Activated CD4-positive, alpha-beta T cell treated with anti-CD3 and anti-CD28 coated beads, Interleukin-2, amount 10 ng/mL, durations not matched to agents 24 days and 14 days (primary cell): ENCODE measurements at regions of chr13 and their contacts with region 1.

Region 1: GRCh38 chr13:99442273-99442895 is 58.9 kb upstream of the TM9SF2 start:
- DNase-seq: peak; percentile 89
- H3K4me3 Mint-ChIP-seq: no peak overlapping the region
- H3K27ac Mint-ChIP-seq: no peak overlapping the region
- H3K4me1 Mint-ChIP-seq: peaks cover 8% of the 10 kb centered on the region
- H3K27me3 Mint-ChIP-seq: peaks cover 31% of the 10 kb centered on the region

Region 2: DNA sequence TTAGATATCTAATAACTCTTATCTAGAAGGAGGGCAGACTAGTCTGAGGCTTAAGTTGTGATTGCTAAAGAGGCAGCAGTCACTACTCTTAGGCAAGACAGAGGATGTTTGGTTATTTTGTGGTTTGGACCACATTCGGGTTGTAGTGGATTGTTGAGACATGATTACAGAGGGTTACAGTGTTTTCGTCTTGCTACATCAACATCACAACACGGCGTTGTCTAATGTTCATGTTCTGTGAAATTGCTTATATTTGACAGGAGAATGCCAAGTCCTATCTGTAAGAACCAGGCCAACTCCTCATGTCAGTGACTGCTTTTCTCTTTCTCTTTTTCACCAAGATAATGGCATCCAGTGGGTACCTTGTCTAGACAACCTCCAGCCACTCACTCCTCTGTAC is 42.1 kb after region 1 on chr13:
- intact Hi-C with region 1: no loop called
- DNase-seq: peak; percentile 72
- H3K4me3 Mint-ChIP-seq: peak overlapping the region; percentile 27
- H3K27ac Mint-ChIP-seq: no peak overlapping the region
- H3K4me1 Mint-ChIP-seq: peaks cover 20% of the 10 kb centered on the region
- H3K27me3 Mint-ChIP-seq: no peaks in the 10 kb centered on the region

Region 3: DNA sequence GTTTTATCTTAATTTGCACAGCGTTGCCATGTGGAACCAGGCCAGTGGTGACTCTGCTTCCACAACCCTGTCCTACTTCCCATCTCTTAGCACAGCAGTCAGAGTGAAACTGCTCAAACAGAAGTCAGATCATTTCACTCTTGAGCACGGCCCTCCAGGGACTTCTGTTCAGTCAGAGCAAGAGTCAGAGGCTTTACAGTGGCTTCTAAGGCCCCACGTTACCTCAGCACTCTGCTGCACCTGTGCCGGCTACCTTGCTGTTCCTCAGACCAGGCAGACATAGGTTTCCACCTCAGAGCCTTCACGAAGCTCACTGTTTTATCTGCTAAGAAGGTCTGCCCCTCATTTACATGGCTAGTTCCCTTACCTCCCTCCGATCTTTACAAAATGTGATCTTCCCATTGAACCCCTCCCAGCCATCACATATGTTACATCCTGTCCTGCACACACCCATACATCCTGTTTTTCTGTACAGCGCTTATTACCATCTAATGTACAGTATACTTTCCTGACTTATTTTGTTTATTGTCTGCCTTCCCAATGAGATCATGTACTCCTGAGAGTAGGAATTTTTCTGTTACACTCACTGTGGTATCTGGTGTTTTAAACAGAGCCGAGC is 100.5 kb after region 1 on chr13:
- intact Hi-C with region 1: loop called (anchors 10 kb)
- DNase-seq: peak; percentile 83
- H3K4me3 Mint-ChIP-seq: peak overlapping the region; percentile 39
- H3K27ac Mint-ChIP-seq: peak overlapping the region; percentile 23
- H3K4me1 Mint-ChIP-seq: peaks cover 30% of the 10 kb centered on the region
- H3K27me3 Mint-ChIP-seq: no peaks in the 10 kb centered on the region

Region 4: GRCh38 chr13:99614385-99614885 is 172.1 kb after region 1 on chr13:
- intact Hi-C with region 1: loop called (anchors 2 kb)
- DNase-seq: peak; percentile 72
- H3K4me3 Mint-ChIP-seq: no peak overlapping the region
- H3K27ac Mint-ChIP-seq: no peak overlapping the region
- H3K4me1 Mint-ChIP-seq: peaks cover 7% of the 10 kb centered on the region
- H3K27me3 Mint-ChIP-seq: no peaks in the 10 kb centered on the region